Activated B cell treated with CpG ODN at 0.5 μM for 24 hours (primary cell): ENCODE measurements at regions of chr22 and their contacts with region 1.

Region 1: GRCh38 chr22:29040385-29041275 is 21.0 kb downstream of the C22orf31 start:
- DNase-seq: no peak
- ATAC-seq: peak; percentile 61
- H3K4me3 Mint-ChIP-seq: no peak overlapping the region
- H3K27ac Mint-ChIP-seq: no peak overlapping the region
- H3K4me1 Mint-ChIP-seq: no peaks in the 10 kb centered on the region
- H3K27me3 Mint-ChIP-seq: peaks cover 3% of the 10 kb centered on the region
- CTCF ChIP-seq: no peak

Region 2: DNA sequence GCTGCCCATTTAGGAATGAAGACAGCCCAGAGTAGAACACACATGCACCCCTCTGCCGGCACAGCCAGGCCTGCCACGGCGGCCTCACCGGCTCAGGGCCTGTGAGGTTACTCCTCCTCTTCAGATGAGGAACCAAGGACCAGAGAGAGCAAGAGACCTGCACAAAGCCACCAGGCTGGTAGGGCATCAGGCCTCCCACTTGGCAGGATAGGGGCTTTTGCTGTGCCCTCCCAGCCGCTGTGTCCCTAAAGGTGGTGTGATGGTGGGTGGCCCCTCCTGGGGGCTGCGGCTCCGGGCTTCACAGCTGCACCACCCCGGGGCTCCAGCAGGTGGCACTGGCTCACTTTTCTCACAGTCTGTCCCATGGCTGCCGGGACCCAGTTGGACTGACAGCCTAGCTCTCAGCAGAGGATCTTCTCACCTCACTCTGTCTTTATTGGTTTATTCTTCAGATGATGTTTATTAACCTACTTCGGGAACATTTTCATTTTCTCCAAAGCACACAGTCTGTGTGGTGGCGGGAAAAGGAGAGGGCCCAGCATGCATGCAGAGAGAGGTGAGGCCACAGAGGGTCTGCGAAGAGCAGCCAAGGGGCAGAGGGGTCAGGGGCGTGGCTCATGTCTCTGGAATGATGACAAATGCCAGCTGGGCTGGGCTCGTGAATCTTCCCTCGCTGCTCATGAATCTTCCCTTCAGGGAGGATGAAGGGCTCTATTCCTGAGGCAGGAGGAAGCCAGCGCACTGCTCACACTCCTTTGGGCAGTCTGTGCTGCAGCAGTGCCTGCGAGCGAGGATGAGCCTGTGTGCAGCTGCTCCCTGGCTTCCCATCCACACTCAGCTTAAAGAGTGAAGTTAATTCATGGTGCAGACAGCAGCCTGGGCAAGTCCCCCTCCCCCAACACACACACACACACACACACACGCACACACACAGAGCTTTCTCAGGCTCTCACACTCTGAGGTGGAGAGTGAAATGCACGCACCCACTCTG is 1020.5 kb before region 1 on chr22:
- CTCF ChIA-PET with region 1: interaction called, 8 read pairs
- POLR2A ChIA-PET with region 1: no interaction called
- intact Hi-C with region 1: loop called (anchors 1 kb)
- DNase-seq: peak; percentile 58
- ATAC-seq: peak; percentile 96
- H3K4me3 Mint-ChIP-seq: no peak overlapping the region
- H3K27ac Mint-ChIP-seq: no peak overlapping the region
- H3K4me1 Mint-ChIP-seq: peaks cover 2% of the 10 kb centered on the region
- H3K27me3 Mint-ChIP-seq: no peaks in the 10 kb centered on the region
- CTCF ChIP-seq: no peak

Region 3: GRCh38 chr22:28600546-28601143 is 440.0 kb before region 1 on chr22:
- CTCF ChIA-PET with region 1: interaction called, 77 read pairs
- POLR2A ChIA-PET with region 1: no interaction called
- intact Hi-C with region 1: loop called (anchors 1 kb)
- DNase-seq: no peak
- ATAC-seq: no peak
- H3K4me3 Mint-ChIP-seq: no peak overlapping the region
- H3K27ac Mint-ChIP-seq: no peak overlapping the region
- H3K4me1 Mint-ChIP-seq: no peaks in the 10 kb centered on the region
- H3K27me3 Mint-ChIP-seq: peaks cover 5% of the 10 kb centered on the region
- CTCF ChIP-seq: peak; percentile 34

Region 4: DNA sequence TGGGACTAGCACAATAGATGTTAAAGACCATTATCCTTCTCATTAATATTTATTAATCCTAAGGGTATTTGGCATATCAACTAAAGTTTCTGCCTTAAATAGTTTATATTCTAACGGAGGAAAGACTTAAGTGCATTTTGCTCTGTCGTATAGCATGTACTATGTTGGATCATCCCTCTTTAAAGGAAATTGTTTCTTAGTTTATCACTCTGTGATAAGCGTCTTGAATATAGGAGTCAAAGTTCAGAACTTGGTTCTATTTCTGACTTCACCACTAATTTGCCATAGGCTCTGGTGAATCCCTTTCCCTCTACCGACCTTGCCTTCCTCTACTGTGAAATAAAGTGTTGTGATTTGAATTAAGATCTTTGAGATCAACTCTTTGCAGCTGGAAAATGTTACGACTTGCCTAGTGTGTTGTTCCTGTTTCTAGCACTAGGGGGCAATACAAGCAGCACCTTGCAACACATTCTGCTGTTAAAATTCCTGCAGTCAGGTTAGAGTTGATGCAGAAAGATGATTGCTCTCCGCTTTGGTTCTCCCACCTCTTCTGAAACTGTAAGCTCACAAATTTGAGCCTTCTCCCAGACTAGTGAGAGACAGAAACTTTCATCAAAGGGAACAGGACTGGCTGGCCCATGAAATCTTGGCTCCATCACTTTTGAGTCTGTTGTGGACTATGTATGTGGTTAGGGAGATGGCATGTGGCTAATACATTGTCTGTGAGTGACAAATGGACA is 185.1 kb before region 1 on chr22:
- CTCF ChIA-PET with region 1: interaction called, 87 read pairs
- POLR2A ChIA-PET with region 1: no interaction called
- intact Hi-C with region 1: loop called (anchors 1 kb)
- DNase-seq: no peak
- ATAC-seq: peak; percentile 57
- H3K4me3 Mint-ChIP-seq: no peak overlapping the region
- H3K27ac Mint-ChIP-seq: no peak overlapping the region
- H3K4me1 Mint-ChIP-seq: no peaks in the 10 kb centered on the region
- H3K27me3 Mint-ChIP-seq: peaks cover 6% of the 10 kb centered on the region
- CTCF ChIP-seq: no peak